A673 (cell line): ENCODE measurements at regions of chrX and their contacts with region 1.

Region 1: DNA sequence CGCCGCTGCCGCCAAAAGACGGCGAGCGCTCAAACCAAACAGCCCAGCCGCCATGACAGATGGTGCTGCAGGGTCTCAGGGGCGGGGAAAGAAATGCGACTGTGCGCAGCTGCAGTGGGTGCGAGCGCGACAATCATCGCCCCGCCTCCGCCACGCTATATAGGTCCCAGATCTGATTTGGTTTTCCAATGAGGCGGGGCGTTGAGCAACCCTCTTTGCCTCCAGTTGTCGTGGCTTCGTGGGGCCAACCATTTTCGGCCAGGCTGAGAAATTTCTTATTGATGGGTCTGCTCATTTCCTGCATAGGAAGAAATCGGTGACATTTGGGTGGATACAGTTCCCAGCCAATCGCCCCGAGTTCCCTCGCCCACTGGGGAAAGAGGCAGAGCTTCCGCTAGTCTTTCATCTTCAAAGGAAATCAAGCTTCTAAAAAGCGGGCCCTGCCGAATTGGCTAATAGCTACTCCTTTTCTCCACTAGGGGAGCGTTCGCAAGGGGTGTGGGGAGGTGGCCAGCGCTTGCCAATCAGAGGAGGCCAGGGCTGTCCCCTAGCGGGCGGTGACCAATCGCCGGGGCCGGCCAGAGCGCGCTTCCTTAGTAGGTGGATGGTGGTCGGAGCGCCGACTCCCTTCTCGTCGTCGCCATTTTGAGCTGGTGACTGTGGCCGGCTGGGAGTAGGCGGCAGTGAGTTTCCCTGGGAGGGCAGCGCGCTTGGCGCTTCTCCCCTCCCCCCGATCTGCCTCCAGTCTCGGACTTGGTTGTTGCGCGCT is at the starts of genes NDUFB11 and RBM10:
- DNase-seq: peak; percentile 96
- H3K4me3 ChIP-seq: peak within 1 kb of the TSS; percentile 90
- H3K27ac ChIP-seq: peak within 1 kb of the TSS; percentile 98
- H3K4me1 ChIP-seq: no peaks in the 10 kb centered on the region
- H3K27me3 ChIP-seq: no peaks in the 10 kb centered on the region
- CTCF ChIP-seq: peak; percentile 66
- total RNA-seq, gene NDUFB11: 137 and 141 TPM in 2 replicates
- total RNA-seq, gene RBM10: 80.9 and 85.3 TPM in 2 replicates

Region 2: DNA sequence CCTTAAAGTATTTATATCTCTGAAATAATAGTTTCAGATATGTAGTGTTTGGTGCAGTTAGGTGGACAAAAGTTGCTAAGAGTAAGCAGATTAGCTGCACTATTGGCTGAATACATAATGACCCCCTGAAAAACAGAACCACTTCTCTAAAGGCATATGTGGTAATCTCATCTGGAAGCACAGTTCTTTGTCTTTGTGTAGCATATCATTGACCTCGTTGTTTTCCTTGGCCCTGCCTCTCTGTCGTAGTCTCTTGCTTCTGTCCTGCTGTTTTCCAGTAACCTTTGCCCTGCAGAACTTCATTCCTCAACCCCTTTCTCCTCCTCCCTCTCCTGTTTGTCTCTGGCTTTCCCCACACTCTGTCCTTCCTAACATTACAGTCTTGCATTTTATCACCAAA is 191.2 kb before region 1 on chrX:
- CTCF ChIA-PET with region 1: no interaction called
- POLR2A ChIA-PET with region 1: interaction called, 14 read pairs
- intact Hi-C with region 1: no loop called
- DNase-seq: no peak
- H3K4me3 ChIP-seq: no peak overlapping the region
- H3K27ac ChIP-seq: peak overlapping the region; percentile 14
- H3K4me1 ChIP-seq: peaks cover 22% of the 10 kb centered on the region
- H3K27me3 ChIP-seq: no peaks in the 10 kb centered on the region
- CTCF ChIP-seq: no peak